Caco-2 (cell line): ENCODE measurements at regions of chr5 and their contacts with region 1.

Region 1: GRCh38 chr5:69166686-69167492 is at the start of gene CCNB1:
- DNase-seq: peak; percentile 99
- H3K4me3 ChIP-seq: peak within 1 kb of the TSS; percentile 100
- H3K4me3 Mint-ChIP-seq: peak within 1 kb of the TSS; percentile 100
- H3K27ac Mint-ChIP-seq: peak within 1 kb of the TSS; percentile 100
- H3K4me1 ChIP-seq: peaks cover 8% of the 10 kb centered on the region; the same call in 1 of the 2 replicates
- H3K4me1 Mint-ChIP-seq: peaks cover 20% of the 10 kb centered on the region
- H3K27me3 ChIP-seq: no peaks in the 10 kb centered on the region
- H3K27me3 Mint-ChIP-seq: no peaks in the 10 kb centered on the region
- CTCF ChIP-seq: peak in 1 of 2 experiments; percentile 19
- total RNA-seq, gene CCNB1: 311 and 338 TPM in 2 replicates

Region 2: DNA sequence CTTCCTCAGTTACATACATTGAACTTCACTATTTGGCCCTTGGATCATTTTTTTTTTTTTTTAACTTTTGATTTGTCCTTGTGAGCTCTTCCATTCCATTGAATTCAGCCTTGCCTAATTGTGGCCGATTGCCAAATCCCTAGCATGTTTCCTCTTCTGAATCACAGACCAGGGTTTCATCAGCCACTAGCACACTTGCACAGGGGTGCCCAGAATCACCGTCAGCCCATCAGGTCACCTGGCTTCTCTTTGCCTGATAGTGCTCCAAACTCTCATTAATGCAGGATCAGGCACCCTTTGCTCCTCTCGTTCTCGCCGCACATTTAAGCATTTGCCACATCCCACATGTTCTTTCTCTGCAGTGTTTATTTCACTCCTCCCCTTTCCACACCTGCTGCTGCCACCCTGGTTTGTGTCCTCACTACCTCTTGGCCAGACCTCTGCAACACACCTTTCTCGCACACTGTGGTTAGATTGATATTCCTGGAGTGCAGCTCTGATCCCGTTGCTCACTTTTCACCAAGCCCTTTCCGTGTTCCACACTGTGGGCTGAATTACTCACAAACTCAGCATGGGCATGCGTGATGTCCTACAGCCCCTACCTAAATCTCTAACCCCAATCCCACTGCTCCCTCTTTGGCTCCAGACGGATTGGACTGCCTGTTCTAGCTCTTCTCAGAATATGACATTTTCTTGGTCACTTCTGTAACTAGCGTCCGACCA is 941.5 kb before region 1 on chr5:
- CTCF ChIA-PET with region 1: no interaction called
- POLR2A ChIA-PET with region 1: no interaction called
- intact Hi-C with region 1: no loop called
- DNase-seq: no peak
- H3K4me3 ChIP-seq: no peak overlapping the region
- H3K4me3 Mint-ChIP-seq: no peak overlapping the region
- H3K27ac Mint-ChIP-seq: peak overlapping the region; percentile 27
- H3K4me1 ChIP-seq: 0 out of 2 replicates have a peak, but pooled peaks cover 11% of the 10 kb centered on the region
- H3K4me1 Mint-ChIP-seq: peaks cover 38% of the 10 kb centered on the region
- H3K27me3 ChIP-seq: no peaks in the 10 kb centered on the region
- H3K27me3 Mint-ChIP-seq: no peaks in the 10 kb centered on the region
- CTCF ChIP-seq: no peak

Region 3: DNA sequence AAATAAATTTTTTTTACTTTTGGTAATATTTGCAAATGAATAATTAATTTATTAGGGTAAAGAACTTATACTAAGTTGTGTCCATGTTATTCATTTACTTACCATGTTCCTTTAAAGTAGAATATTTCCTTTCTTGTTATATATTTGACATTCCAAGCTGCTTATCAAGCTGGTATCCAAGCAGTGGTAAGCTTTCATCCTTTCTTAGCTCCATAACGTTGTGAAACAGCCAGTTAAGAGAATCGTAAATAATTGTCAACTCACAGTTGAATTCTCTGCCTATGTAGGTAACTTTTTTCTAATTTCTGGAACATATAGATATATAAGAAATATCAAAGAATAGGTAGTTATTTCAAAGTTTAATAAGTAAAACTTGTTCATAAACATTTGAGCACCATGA is 36.6 kb before region 1 on chr5:
- CTCF ChIA-PET with region 1: no interaction called
- POLR2A ChIA-PET with region 1: interaction called, 3 read pairs
- intact Hi-C with region 1: loop called (anchors 2 kb)
- DNase-seq: peak in 1 of 2 experiments; percentile 29
- H3K4me3 ChIP-seq: no peak overlapping the region
- H3K4me3 Mint-ChIP-seq: no peak overlapping the region
- H3K27ac Mint-ChIP-seq: no peak overlapping the region
- H3K4me1 ChIP-seq: peaks cover 24% of the 10 kb centered on the region
- H3K4me1 Mint-ChIP-seq: peaks cover 5% of the 10 kb centered on the region
- H3K27me3 ChIP-seq: no peaks in the 10 kb centered on the region
- H3K27me3 Mint-ChIP-seq: no peaks in the 10 kb centered on the region
- CTCF ChIP-seq: no peak

Region 4: DNA sequence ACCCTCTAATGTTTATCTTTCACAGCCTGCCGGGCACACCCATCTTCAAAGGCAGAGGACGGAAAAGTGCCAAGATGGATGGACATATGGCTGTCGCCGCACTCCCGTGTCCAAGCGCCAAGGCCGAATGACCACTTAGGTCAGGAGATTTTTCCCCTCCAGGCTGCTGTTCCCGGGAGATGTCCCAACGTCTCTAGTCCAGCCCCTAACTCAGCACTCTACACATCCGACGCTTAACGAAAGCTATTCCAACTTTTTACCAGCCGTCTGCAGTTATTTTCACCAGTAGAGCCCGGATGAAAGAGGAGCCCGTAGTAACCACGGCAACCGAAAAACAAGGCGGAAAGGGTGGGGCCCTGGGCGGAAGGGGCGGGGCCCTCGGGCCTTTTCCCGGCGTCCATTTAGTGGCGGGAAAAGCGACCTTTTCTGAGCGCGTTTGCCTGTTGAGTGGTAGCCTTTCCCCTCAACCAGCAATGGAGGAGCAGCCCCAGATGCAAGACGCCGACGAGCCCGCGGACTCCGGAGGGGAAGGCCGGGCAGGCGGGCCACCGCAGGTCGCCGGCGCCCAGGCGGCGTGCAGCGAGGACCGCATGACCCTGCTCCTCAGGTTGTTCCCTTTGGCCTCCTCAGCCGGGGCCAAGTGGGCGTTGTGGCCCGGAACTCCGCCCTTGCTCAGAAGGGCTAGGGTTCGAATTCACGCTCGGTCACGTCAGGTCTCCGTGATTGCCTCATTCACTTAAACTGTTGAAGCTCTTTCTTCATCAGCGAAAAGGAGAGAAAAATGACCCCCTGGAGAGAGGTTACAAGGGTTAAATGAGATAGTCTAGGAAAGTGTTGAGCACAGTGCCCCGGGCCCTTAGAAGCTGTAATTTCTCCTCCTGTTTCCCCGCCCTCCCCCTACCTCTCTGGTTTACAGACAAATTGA is 22.5 kb after region 1 on chr5 and contains the start of gene CENPH:
- CTCF ChIA-PET with region 1: no interaction called
- POLR2A ChIA-PET with region 1: interaction called, 6 read pairs
- intact Hi-C with region 1: loop called (anchors 1 kb)
- DNase-seq: peak; percentile 93 to 96
- H3K4me3 ChIP-seq: peak within 1 kb of the TSS; percentile 87
- H3K4me3 Mint-ChIP-seq: peak within 1 kb of the TSS; percentile 96
- H3K27ac Mint-ChIP-seq: peak within 1 kb of the TSS; percentile 100
- H3K4me1 ChIP-seq: no peaks in the 10 kb centered on the region
- H3K4me1 Mint-ChIP-seq: no peaks in the 10 kb centered on the region
- H3K27me3 ChIP-seq: no peaks in the 10 kb centered on the region
- H3K27me3 Mint-ChIP-seq: no peaks in the 10 kb centered on the region
- CTCF ChIP-seq: no peak
- total RNA-seq, gene CENPH: 30.2 and 32.4 TPM in 2 replicates

Region 5: DNA sequence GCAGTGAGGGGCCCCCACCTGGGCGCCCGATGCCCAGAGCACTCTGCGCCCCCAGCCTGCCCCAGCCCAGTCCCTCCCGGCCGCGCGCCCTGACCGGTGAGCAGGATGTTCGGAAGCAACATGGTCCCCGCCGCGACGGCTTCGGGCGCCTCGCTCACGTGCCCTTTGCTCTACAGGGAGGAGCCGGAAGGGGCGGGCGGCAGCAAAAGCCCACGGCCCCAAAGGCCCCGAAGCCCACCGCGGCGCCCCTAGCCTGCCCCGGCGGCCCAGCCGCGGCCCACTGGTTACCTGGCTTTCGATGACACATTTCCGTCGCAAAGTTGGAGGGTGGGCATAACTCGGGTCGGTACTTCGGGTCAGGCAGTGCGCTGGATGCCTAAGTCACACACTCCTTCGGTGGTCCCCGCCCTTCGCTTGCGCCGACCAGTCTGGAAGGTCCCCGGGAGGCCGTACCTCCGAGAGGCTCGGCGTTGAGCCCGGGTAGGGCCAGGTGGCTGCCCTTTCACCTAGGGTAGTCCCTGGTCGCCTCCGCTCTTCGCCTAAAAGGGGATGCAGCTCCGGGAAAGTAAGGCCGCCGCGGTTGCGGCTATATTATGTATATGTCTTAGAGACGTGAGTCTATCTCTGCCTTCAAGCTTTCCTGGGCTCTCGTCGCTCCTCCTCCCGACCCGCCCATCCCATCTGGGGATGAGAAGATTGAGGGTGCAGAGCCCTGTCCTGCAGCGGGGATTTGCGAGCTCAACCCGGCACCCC is 202.7 kb after region 1 on chr5 and contains the starts of genes AK6, RAD17 and TAF9:
- CTCF ChIA-PET with region 1: no interaction called
- POLR2A ChIA-PET with region 1: no interaction called
- intact Hi-C with region 1: loop called (anchors 1 kb)
- DNase-seq: peak; percentile 94 to 95
- H3K4me3 ChIP-seq: peak within 1 kb of the TSS; percentile 67
- H3K4me3 Mint-ChIP-seq: peak within 1 kb of the TSS; percentile 90
- H3K27ac Mint-ChIP-seq: peak within 1 kb of the TSS; percentile 99
- H3K4me1 ChIP-seq: peaks cover 15% of the 10 kb centered on the region
- H3K4me1 Mint-ChIP-seq: peaks cover 8% of the 10 kb centered on the region
- H3K27me3 ChIP-seq: no peaks in the 10 kb centered on the region
- H3K27me3 Mint-ChIP-seq: no peaks in the 10 kb centered on the region
- CTCF ChIP-seq: no peak
- total RNA-seq, gene AK6: 66.8 and 75.1 TPM in 2 replicates
- total RNA-seq, gene RAD17: 33.8 and 36.0 TPM in 2 replicates
- total RNA-seq, gene TAF9: 92.5 and 101 TPM in 2 replicates